Right lobe of liver (tissue), 6 donors: ENCODE measurements at regions of chr1 and their contacts with region 1.

Region 1: DNA sequence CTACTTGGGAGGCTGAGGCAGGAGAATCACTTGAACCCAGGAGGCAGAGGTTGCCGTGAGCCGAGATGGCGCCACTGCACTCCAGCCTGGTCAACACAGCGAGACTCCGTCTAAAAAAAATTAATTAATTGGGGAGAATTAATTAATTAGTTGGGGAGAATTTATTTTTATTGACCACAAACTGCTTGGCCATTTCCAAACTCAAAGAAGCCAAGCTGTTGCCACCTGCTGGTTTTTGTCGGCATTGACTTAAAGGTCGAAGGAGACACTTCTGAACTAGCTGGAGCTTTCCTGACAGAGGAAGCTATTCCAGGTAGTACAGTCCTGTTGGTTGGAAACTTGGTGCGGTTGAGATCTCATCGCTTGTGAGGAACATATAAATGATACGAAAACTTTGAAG is 13.1 kb downstream of the MAP1LC3C start:
- DNase-seq: no peak
- ATAC-seq: peak; percentile 62 to 76 (median 71)
- H3K4me3 ChIP-seq: no peak overlapping the region
- H3K27ac ChIP-seq: no peak overlapping the region
- H3K4me1 ChIP-seq: no peaks in the 10 kb centered on the region
- H3K27me3 ChIP-seq: no peaks in the 10 kb centered on the region
- CTCF ChIP-seq: peak; percentile 44 to 61 (median 50)
- POLR2A ChIP-seq: no peak

Region 2: DNA sequence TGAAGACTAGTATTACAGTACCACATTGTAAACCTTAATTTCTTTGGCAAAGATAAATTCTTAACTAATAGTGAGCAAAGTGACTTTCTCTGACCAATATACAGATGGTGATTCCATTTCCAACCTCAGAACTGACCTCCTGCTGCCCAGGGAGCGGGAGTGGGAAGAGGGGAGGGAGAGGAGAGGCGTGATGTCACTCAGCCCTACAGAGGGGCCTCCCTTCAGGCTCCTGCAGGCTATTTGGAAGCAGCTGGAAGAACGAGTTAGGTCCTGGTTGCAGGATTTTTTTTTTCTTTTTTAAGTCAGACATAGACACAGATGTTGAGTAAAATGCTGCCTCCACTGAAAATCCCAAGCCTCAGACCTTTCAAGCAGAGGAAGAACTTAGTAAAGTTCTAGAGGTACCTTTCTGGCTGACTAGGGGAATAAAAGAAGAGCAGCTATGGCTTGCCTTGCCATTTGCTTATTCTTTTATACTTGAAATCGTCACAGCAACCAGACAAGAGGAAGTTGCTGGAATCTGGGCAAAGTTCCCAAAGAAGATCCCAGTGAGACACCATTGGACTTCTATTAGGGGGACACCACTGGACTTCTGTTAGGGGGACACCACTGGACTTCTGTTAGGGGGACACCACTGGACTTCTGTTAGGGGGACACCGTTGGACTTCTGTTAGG is 83.3 kb before region 1 on chr1:
- intact Hi-C with region 1: loop called in 1 of 2 experiments (anchors 10 kb)
- DNase-seq: no peak
- ATAC-seq: no peak
- H3K4me3 ChIP-seq: no peak overlapping the region
- H3K27ac ChIP-seq: no peak overlapping the region
- H3K4me1 ChIP-seq: no peaks in the 10 kb centered on the region
- H3K27me3 ChIP-seq: no peaks in the 10 kb centered on the region
- CTCF ChIP-seq: no peak
- POLR2A ChIP-seq: no peak

Region 3: DNA sequence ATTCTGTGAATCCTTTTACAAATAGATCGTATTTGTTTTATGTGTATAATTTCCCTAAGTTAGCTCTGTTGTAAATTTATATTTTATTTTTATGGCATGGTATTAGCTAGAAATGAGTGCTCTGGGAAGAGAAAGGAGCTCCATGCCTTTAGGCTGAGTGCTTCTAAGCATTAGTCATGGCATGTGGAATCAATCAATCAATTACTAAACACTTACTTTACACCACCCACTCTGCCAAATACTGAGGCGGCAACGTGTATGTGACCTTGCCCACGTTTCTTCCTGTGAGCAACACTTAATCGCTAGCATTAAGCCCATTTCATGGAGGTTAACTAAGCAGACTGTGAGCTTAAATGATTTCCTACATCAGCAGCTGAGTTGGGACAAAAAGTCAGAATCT is 35.4 kb before region 1 on chr1:
- intact Hi-C with region 1: no loop called
- DNase-seq: no peak
- ATAC-seq: no peak
- H3K4me3 ChIP-seq: no peak overlapping the region
- H3K27ac ChIP-seq: no peak overlapping the region
- H3K4me1 ChIP-seq: no peaks in the 10 kb centered on the region
- H3K27me3 ChIP-seq: no peaks in the 10 kb centered on the region
- CTCF ChIP-seq: no peak
- POLR2A ChIP-seq: no peak